GM10248 (cell line): ENCODE measurements at regions of chr5 and their contacts with region 1.

Region 1: DNA sequence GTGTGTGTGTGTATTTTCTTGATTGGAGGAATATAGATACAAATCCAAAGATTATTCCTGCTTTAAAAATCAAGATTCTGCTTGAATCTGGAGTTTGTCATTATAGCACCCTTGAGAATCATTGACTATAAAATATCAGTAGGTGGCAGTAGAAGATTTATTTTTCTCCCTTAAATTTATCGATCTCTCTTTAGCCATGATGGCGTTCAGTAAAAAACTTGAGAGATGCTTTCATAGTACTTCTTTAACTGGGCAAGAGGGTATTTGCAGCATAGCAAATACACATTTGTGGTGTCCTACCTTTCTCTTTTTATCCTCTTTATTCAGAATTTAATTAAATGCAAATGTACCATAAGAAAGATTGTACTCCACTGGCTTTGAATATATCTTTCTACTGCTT is 307.7 kb downstream of the ADGRV1 start:
- DNase-seq: peak; percentile 23
- CTCF ChIP-seq: peak; percentile 23

Region 2: DNA sequence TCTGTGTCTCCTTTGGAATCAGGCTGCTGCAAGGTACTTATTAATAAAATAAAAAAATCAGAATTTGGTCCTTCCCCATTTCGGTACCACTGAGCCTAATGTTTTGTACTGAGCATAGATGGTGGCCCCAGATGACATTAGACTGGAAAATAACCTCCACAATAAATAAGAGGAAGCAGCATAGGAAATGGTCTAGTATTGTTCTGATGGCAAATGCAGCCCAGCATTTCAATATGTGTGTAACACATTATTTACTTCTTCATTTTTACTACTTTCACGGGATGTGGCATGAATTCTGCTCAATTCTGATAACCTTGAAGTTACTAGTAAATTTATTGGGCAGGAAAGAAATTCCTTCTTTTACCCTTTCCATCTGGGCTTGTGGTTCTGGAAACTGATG is 12.2 kb before region 1 on chr5:
- CTCF ChIA-PET with region 1: interaction called, 10 read pairs
- POLR2A ChIA-PET with region 1: no interaction called
- DNase-seq: no peak
- CTCF ChIP-seq: no peak

Region 3: DNA sequence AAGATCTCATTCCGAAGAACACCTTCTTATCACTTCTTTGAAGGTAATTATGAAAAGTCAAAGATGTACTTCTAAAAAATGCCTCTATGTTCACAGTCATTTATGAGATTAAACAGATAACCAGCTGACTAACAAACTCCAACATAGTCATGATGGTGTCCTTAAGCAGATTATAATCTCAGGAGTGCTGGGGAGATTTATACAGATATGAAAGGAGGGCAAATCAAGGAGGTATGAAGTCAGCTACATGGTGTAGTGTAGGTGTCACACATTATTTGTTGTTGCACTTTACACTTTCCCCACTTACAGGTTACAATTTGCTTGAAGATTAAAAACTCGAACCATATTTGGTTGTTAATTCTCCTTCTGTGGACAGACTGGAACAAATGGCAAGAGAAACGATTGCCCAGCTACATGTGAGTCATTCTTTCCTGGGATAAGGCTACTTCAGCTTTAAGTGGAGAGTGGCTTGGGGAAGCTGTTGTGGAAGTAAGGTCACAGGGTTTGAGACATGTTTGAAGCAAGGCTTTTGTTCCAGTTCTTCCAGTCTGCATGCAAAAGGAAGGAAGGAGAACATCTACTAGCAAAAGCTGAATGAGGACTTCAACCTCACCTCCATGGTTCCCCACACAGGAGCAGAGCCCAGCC is 12.3 kb after region 1 on chr5:
- CTCF ChIA-PET with region 1: interaction called, 10 read pairs
- POLR2A ChIA-PET with region 1: no interaction called
- DNase-seq: no peak
- CTCF ChIP-seq: no peak